B cell (primary cell): ENCODE measurements at regions of chr3 and their contacts with region 1.

Region 1: DNA sequence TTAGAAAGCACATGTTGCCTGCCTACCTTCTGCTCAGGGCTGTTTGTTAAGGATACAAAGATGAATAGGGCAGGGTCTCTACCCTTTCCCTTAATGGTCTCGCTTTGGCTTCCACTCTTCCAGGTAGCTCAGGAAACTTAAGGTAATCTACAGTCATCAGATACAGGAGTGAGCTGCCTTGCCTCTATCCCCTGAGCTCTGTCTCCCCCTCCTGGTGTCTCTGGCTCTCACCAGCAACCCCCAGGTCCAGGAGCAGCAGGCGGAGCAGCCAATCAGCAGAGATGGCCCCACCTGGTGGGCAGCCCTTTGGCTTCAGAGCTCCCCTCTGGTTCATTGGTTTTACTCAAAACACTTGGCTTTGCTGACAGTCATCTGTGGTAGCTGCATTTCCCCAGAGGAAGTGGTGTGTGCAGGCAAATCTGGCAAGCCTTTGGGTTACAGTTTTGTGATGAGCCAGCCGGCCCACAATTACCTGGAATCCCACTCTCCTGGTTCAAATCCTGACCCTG is 8.5 kb upstream of the CX3CR1 start:
- DNase-seq: peak; percentile 94
- ATAC-seq: peak; percentile 99
- H3K4me3 ChIP-seq: no peak overlapping the region
- H3K4me3 Mint-ChIP-seq: no peak overlapping the region
- H3K27ac ChIP-seq: no peak overlapping the region
- H3K27ac Mint-ChIP-seq: peak overlapping the region; percentile 67
- H3K4me1 ChIP-seq: peaks cover 13 to 27% of the 10 kb centered on the region in 2 donors
- H3K4me1 Mint-ChIP-seq: peaks cover 39% of the 10 kb centered on the region
- H3K27me3 ChIP-seq: no peaks in the 10 kb centered on the region
- H3K27me3 Mint-ChIP-seq: no peaks in the 10 kb centered on the region
- CTCF ChIP-seq: peak; percentile 96

Region 2: DNA sequence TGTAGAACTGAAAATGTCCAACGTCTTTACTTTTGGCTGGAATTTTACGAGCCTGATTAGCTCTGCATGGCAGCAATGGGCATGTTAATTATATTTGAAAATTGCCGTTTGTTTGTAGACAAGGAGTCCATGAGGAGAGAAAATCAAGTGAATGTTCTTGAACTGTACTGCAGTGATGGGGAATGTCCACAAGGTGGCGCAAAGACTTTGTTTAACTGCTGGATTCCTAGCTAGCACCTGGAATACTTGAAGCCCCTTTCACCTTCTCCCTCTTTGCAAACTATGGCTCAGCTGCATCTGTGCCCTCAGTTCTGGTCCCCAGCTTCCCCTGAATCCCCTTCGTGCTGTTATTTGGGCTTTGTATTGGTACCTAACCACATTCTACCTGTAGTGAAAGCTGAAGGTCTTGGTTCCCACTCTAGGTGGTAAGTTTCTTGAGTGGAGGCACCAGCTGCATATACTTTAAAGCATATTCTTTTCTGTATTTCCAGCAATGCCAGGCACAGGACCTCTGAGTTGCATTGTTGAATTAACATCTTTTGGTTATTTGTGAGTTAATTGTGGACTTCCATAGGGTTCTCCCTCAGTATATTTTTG is 766.9 kb before region 1 on chr3:
- CTCF ChIA-PET with region 1: interaction called, 56 read pairs
- POLR2A ChIA-PET with region 1: no interaction called
- intact Hi-C with region 1: loop called (anchors 1 kb)
- DNase-seq: peak; percentile 75
- ATAC-seq: peak; percentile 56
- H3K4me3 ChIP-seq: no peak overlapping the region
- H3K4me3 Mint-ChIP-seq: no peak overlapping the region
- H3K27ac ChIP-seq: no peak overlapping the region
- H3K27ac Mint-ChIP-seq: no peak overlapping the region
- H3K4me1 ChIP-seq: peaks cover 7 to 12% of the 10 kb centered on the region in 2 donors
- H3K4me1 Mint-ChIP-seq: peaks cover 18% of the 10 kb centered on the region
- H3K27me3 ChIP-seq: no peaks in the 10 kb centered on the region
- H3K27me3 Mint-ChIP-seq: no peaks in the 10 kb centered on the region
- CTCF ChIP-seq: peak; percentile 95

Region 3: DNA sequence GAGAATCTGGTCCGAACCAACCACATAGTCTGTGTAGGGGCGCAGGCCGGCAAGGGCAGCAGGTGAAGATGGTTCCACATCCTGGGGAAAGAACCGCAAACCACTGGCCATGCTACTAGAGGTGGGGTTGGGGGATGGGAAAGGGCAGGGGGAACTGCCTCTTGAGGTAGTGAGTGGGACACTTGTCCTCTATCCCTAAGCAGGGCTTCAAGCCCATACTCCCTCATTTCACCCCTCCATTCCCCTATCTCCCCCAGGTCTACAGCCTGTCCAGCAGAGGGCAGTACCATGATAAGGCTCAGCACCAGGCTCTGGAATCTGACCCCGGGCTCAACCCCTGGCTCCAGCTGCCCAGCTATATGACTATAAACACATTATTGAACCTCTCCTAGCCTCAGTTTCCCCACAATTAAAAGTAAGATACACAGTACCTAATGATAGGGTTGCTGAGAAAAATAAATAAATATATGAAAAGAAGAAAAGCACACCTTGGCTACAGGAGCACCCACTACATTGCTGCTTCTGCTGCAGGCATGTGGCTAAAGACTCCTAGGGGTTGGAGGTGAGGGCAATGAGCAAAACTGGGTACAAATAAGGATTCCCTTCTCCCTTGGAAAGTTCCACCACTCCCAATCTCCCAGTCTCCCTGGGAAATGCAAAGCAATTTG is 187.2 kb before region 1 on chr3:
- CTCF ChIA-PET with region 1: interaction called, 44 read pairs
- POLR2A ChIA-PET with region 1: no interaction called
- intact Hi-C with region 1: loop called (anchors 1 kb)
- DNase-seq: peak; percentile 71
- ATAC-seq: peak; percentile 85
- H3K4me3 ChIP-seq: no peak overlapping the region
- H3K4me3 Mint-ChIP-seq: no peak overlapping the region
- H3K27ac ChIP-seq: peak overlapping the region in 1 of 2 donors; percentile 9
- H3K27ac Mint-ChIP-seq: peak overlapping the region; percentile 71
- H3K4me1 ChIP-seq: peaks cover 11 to 31% of the 10 kb centered on the region in 2 donors
- H3K4me1 Mint-ChIP-seq: peaks cover 46% of the 10 kb centered on the region
- H3K27me3 ChIP-seq: no peaks in the 10 kb centered on the region
- H3K27me3 Mint-ChIP-seq: no peaks in the 10 kb centered on the region
- CTCF ChIP-seq: peak; percentile 71

Region 4: DNA sequence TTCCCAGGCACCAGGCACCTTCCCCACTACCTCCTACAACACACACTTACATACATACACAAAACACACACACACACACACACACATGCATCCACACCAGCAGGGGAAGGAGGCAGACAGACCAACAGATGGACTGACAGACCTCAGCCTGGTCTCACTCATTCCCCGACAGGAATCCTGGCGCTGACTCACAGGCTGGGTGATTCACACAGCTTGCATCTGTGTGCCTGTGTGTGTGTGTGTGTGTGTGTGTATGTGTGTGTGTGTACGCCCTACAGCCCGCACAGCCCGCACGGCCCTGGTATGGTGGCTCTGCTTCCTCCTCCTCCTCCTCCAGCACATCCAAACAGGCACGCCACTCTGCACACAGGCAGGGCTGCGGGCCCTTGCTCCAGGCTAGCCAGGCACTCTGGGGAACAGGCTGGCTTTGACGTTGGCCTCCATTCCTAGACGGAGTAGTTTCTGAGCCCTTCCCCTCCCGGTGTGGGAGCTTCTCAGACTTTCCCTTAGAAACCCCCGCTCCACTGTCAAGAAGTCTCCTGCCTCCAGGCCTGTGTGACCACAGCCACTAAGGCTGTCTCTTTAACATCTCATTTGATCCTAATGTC is 141.3 kb before region 1 on chr3:
- CTCF ChIA-PET with region 1: interaction called, 36 read pairs
- POLR2A ChIA-PET with region 1: no interaction called
- intact Hi-C with region 1: no loop called
- DNase-seq: peak; percentile 56
- ATAC-seq: peak; percentile 16
- H3K4me3 ChIP-seq: peak overlapping the region; percentile 11 to 61 (median 48)
- H3K4me3 Mint-ChIP-seq: peak overlapping the region; percentile 99
- H3K27ac ChIP-seq: peak overlapping the region; percentile 87 to 98
- H3K27ac Mint-ChIP-seq: peak overlapping the region; percentile 94
- H3K4me1 ChIP-seq: peaks cover 71 to 73% of the 10 kb centered on the region in 2 donors
- H3K4me1 Mint-ChIP-seq: peaks cover 82% of the 10 kb centered on the region
- H3K27me3 ChIP-seq: no peaks in the 10 kb centered on the region
- H3K27me3 Mint-ChIP-seq: no peaks in the 10 kb centered on the region
- CTCF ChIP-seq: no peak

Region 5: DNA sequence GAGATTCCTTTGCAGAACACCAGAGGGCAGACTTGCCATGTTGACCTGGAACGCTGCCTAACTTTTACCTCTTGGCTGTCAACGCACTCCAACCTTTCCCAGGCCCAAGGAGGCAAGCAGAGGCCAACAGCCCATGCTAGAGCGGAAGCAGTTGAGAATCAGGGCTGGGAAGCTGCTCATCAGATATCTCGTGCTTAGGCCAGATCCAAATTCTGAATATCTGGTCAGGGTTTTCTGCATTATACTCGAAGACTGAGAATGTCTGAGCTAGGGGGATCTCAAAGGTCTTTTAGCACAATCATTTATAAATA is 98.4 kb before region 1 on chr3:
- CTCF ChIA-PET with region 1: interaction called, 1,573 read pairs
- POLR2A ChIA-PET with region 1: interaction called, 23 read pairs
- intact Hi-C with region 1: loop called (anchors 1 kb)
- DNase-seq: peak; percentile 81
- ATAC-seq: peak; percentile 86
- H3K4me3 ChIP-seq: no peak overlapping the region
- H3K4me3 Mint-ChIP-seq: no peak overlapping the region
- H3K27ac ChIP-seq: no peak overlapping the region
- H3K27ac Mint-ChIP-seq: peak overlapping the region; percentile 47
- H3K4me1 ChIP-seq: peaks cover 8% of the 10 kb centered on the region in 2 donors
- H3K4me1 Mint-ChIP-seq: peaks cover 10% of the 10 kb centered on the region
- H3K27me3 ChIP-seq: peaks cover 0 to 10% (median 0%) of the 10 kb centered on the region in 4 experiments
- H3K27me3 Mint-ChIP-seq: peaks cover 3% of the 10 kb centered on the region
- CTCF ChIP-seq: peak; percentile 80

Region 6: GRCh38 chr3:39249453-39250115 is 38.8 kb before region 1 on chr3:
- CTCF ChIA-PET with region 1: interaction called, 90 read pairs
- POLR2A ChIA-PET with region 1: no interaction called
- intact Hi-C with region 1: no loop called
- DNase-seq: no peak
- ATAC-seq: no peak
- H3K4me3 ChIP-seq: no peak overlapping the region
- H3K4me3 Mint-ChIP-seq: no peak overlapping the region
- H3K27ac ChIP-seq: no peak overlapping the region
- H3K27ac Mint-ChIP-seq: no peak overlapping the region
- H3K4me1 ChIP-seq: peaks cover 41 to 47% of the 10 kb centered on the region in 2 donors
- H3K4me1 Mint-ChIP-seq: peaks cover 49% of the 10 kb centered on the region
- H3K27me3 ChIP-seq: no peaks in the 10 kb centered on the region
- H3K27me3 Mint-ChIP-seq: no peaks in the 10 kb centered on the region
- CTCF ChIP-seq: no peak

Region 7: DNA sequence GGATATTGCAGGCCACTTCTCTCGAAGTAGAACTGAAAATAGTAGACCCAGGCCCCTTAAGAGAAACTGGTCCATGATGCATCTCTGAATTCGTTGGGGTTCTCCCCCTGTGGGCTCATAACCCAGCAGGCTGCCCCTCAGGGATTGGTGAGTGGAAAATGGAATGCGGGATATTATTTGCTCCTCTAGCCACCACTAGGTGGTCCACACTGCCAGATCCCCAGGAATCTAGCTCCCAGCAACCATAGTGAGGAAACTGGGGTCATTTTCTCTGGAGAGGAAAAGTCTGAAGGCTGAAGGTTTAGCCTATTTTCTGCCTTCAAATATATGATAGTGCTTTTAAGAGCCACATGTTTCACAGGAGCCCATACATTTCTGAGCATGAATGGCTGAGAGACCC is 15.2 kb before region 1 on chr3:
- CTCF ChIA-PET with region 1: interaction called, 43 read pairs
- POLR2A ChIA-PET with region 1: no interaction called
- intact Hi-C with region 1: no loop called
- DNase-seq: no peak
- ATAC-seq: no peak
- H3K4me3 ChIP-seq: no peak overlapping the region
- H3K4me3 Mint-ChIP-seq: no peak overlapping the region
- H3K27ac ChIP-seq: no peak overlapping the region
- H3K27ac Mint-ChIP-seq: peak overlapping the region; percentile 3
- H3K4me1 ChIP-seq: peaks cover 19 to 21% of the 10 kb centered on the region in 2 donors
- H3K4me1 Mint-ChIP-seq: peaks cover 19% of the 10 kb centered on the region
- H3K27me3 ChIP-seq: no peaks in the 10 kb centered on the region
- H3K27me3 Mint-ChIP-seq: no peaks in the 10 kb centered on the region
- CTCF ChIP-seq: no peak

Region 8: DNA sequence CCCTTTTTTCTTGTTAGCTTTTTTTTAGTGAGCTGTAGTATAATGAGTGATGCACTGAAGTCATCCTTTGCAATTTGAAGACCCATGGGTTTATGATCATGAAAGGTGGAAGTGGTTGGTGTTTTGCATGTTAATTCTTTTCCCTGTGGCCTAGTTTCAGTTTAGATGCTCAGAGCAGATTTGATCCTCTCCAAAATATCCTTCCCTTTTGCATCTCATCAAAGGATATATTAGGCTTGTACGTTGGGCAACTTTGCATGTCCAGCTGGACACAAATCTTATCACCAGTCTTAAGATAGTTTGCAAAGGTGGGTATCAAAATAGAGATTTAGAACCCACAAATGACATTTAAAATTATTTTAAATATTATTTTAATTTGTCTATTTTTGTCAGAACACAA is 593.8 kb after region 1 on chr3:
- CTCF ChIA-PET with region 1: no interaction called
- POLR2A ChIA-PET with region 1: no interaction called
- intact Hi-C with region 1: no loop called
- DNase-seq: no peak
- ATAC-seq: no peak
- H3K4me3 ChIP-seq: no peak overlapping the region
- H3K4me3 Mint-ChIP-seq: no peak overlapping the region
- H3K27ac ChIP-seq: no peak overlapping the region
- H3K27ac Mint-ChIP-seq: no peak overlapping the region
- H3K4me1 ChIP-seq: no peaks in the 10 kb centered on the region
- H3K4me1 Mint-ChIP-seq: no peaks in the 10 kb centered on the region
- H3K27me3 ChIP-seq: no peaks in the 10 kb centered on the region
- H3K27me3 Mint-ChIP-seq: peaks cover 3% of the 10 kb centered on the region
- CTCF ChIP-seq: no peak